ENCODE measurements at regions of chr1 and their contacts with region 1.

Region 1: GRCh38 chr1:67214420-67215174 is 48.3 kb downstream of the IL23R start:
- DNase-seq: no peak
- H3K4me3 ChIP-seq: no peak overlapping the region
- H3K27ac ChIP-seq: no peak overlapping the region
- H3K4me1 ChIP-seq: peaks cover 0 to 2% (median 0%) of the 10 kb centered on the region in 4 experiments; a peak in 1 of 7 replicates
- H3K27me3 ChIP-seq: no peaks in the 10 kb centered on the region
- CTCF ChIP-seq: peak in 2 of 3 experiments; percentile 64 to 69; a peak in 3 of 4 replicates
- EP300 ChIP-seq: no peak
- POLR2A ChIP-seq: no peak
- RAD21 ChIP-seq: peak; percentile 37 to 61

Region 2: GRCh38 chr1:66764994-66765578 is 449.5 kb before region 1 on chr1:
- CTCF ChIA-PET with region 1: interaction called, 10 read pairs
- POLR2A ChIA-PET with region 1: no interaction called
- DNase-seq: peak in 1 of 2 experiments; percentile 49
- H3K4me3 ChIP-seq: no peak overlapping the region
- H3K27ac ChIP-seq: no peak overlapping the region
- H3K4me1 ChIP-seq: no peaks in the 10 kb centered on the region
- H3K27me3 ChIP-seq: no peaks in the 10 kb centered on the region
- CTCF ChIP-seq: peak in 1 of 3 experiments; percentile 63; a peak in 2 of 4 replicates
- EP300 ChIP-seq: no peak
- POLR2A ChIP-seq: no peak
- RAD21 ChIP-seq: peak; percentile 75 to 79

Region 3: DNA sequence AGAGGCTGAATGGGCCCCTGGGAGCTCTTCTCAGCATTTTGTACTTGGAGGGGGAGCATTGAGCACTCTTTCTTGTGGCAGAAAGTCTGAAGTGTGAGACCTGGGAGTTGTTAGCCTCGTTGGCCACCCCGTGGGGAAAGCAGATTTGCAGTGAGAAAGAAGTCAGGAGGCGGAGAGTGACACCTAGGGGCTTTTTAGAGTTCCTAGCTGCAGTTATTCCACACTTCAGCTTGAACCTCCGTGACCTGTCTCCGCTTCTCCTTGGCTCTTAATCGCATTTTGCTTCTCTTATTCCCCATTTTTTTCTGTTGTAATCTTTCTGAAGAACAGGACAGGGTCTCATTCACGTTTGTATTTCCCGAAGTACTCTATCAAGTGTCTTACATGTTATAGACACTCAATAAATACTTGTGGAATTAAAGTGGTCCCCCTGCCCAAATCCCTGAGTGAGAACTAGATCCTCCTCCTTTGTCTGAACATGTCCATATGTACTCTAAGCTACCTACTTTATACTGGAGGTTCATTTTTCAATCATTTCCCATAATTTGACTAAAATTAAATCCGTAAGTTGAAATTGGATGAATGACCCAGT is 65.3 kb before region 1 on chr1:
- CTCF ChIA-PET with region 1: interaction called, 63 read pairs
- POLR2A ChIA-PET with region 1: no interaction called
- DNase-seq: peak; percentile 34 to 60
- H3K4me3 ChIP-seq: no peak overlapping the region
- H3K27ac ChIP-seq: no peak overlapping the region
- H3K4me1 ChIP-seq: 0 out of 7 replicates have a peak, but pooled peaks cover 0 to 4% (median 0%) of the 10 kb centered on the region in 4 experiments
- H3K27me3 ChIP-seq: no peaks in the 10 kb centered on the region
- CTCF ChIP-seq: peak; percentile 58 to 99 (median 78)
- EP300 ChIP-seq: no peak; a peak in 1 of 3 replicates
- POLR2A ChIP-seq: no peak
- RAD21 ChIP-seq: peak; percentile 92 to 96

Region 4: DNA sequence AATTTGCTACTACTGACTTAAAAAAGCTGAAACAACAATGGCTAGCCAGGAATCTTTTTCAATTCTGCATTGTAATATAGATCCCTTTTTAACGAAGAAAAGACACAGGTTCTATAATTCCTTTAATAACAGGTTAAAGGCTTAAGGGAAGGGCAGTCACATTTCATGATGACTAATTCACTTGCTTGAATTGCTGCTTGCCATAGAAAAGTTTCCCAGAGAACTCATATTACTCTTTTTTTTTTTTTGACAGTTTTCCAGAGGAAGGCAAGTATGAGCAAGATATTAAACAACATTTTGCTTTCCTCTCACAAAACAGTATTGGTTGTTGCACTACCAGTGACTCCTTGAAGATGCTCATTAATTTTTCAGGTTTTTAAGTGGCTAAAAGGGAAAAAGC is 12.6 kb after region 1 on chr1:
- CTCF ChIA-PET with region 1: interaction called, 146 read pairs
- POLR2A ChIA-PET with region 1: no interaction called
- DNase-seq: no peak
- H3K4me3 ChIP-seq: no peak overlapping the region
- H3K27ac ChIP-seq: no peak overlapping the region
- H3K4me1 ChIP-seq: no peaks in the 10 kb centered on the region; a peak in 2 of 7 replicates
- H3K27me3 ChIP-seq: no peaks in the 10 kb centered on the region
- CTCF ChIP-seq: no peak
- EP300 ChIP-seq: no peak
- POLR2A ChIP-seq: no peak
- RAD21 ChIP-seq: no peak

Region 5: DNA sequence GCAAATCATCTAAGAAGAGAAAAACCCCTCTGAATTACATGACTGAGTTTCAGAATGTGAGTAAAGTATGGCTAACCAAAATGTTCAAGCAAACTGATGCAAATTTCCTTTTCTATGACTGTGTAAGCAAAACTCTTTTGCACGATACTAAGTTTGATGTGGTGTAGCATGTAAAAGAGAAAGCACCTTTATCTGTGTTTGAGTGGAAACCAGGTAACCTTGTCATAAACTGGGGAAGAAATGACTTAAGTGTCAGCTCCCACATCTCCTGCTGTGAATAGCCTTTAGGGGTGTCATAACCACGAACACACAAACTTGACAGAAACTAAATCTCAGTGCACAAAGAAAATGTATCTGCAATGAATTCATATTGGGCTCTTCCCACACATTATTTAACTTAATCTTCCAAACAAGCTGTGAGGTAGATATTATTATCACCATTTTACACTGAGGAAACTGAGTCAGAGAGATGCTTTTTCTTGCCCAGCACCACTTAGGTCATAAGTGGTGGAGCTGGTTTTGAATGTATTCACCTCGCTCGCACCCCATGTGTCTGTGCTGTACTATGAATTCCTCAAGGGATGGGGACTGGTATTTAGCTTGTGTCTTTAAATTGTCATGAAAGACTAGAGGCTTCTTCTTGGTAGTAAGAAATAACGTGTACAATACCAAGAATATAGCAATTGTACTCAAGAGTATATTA is 60.2 kb after region 1 on chr1:
- CTCF ChIA-PET with region 1: interaction called, 10 read pairs
- POLR2A ChIA-PET with region 1: no interaction called
- DNase-seq: no peak
- H3K4me3 ChIP-seq: no peak overlapping the region
- H3K27ac ChIP-seq: no peak overlapping the region
- H3K4me1 ChIP-seq: no peaks in the 10 kb centered on the region
- H3K27me3 ChIP-seq: no peaks in the 10 kb centered on the region
- CTCF ChIP-seq: no peak
- EP300 ChIP-seq: no peak
- POLR2A ChIP-seq: no peak
- RAD21 ChIP-seq: no peak

Region 6: GRCh38 chr1:67347688-67348472 is 133.3 kb after region 1 on chr1:
- CTCF ChIA-PET with region 1: interaction called, 68 read pairs
- POLR2A ChIA-PET with region 1: no interaction called
- DNase-seq: peak; percentile 13 to 56
- H3K4me3 ChIP-seq: no peak overlapping the region
- H3K27ac ChIP-seq: no peak overlapping the region
- H3K4me1 ChIP-seq: peaks cover 0 to 4% (median 3%) of the 10 kb centered on the region in 4 experiments; a peak in 1 of 7 replicates
- H3K27me3 ChIP-seq: no peaks in the 10 kb centered on the region
- CTCF ChIP-seq: peak; percentile 72 to 85 (median 75)
- EP300 ChIP-seq: no peak
- POLR2A ChIP-seq: no peak
- RAD21 ChIP-seq: peak; percentile 85

Measured in H1 (cell line).